Activated naive CD4-positive, alpha-beta T cell treated with anti-CD3 and anti-CD28 coated beads, Interleukin-2, amount 10 ng/mL, durations not matched to agents 7 days and 5 days (primary cell): ENCODE measurements at regions of chr15 and their contacts with region 1.

Region 1: DNA sequence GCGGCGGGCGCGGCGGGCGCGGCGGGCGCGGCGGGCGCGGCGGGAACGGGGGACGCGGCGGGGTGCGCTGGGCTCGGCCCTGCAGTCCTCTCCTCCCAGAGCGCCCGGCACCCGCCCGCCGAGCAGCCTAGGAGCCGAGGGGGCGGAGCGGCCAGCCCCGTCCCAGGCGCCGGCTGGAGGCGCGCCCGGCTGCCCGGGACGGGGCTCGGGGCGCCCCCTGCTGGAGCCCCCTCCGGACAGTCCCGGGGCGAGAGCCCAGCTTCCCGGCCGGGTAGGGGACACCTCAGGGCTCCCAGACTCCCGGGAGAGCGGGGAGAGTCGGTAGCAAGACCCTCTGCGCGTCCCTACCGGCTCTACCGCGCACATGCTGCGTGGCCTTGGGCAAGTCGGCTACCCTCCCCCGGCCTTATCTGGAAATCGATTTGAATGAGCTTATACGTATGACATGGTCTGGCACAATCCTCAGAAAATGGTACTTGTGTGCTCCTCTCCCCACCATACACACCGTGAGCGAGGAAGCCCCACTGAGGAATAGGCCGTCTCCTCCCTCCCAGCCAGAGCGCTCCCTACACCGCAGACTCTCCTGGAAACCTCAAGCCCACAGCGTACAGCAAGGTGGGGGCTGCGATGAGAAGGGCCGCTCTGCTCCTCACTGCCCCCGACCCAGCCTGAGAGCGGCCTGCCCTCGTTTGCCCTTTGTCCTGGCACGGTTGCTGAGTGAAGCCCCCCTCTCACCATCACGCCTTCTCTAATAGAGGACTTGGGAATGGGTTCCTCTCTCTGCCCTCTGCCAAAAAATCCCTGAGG is at the start of gene DAPK2:
- DNase-seq: peak; percentile 73
- H3K4me3 Mint-ChIP-seq: peak within 1 kb of the TSS; percentile 64
- H3K27ac Mint-ChIP-seq: peak within 1 kb of the TSS; percentile 19
- H3K4me1 Mint-ChIP-seq: peaks cover 4% of the 10 kb centered on the region
- H3K27me3 Mint-ChIP-seq: peaks cover 70% of the 10 kb centered on the region

Region 2: DNA sequence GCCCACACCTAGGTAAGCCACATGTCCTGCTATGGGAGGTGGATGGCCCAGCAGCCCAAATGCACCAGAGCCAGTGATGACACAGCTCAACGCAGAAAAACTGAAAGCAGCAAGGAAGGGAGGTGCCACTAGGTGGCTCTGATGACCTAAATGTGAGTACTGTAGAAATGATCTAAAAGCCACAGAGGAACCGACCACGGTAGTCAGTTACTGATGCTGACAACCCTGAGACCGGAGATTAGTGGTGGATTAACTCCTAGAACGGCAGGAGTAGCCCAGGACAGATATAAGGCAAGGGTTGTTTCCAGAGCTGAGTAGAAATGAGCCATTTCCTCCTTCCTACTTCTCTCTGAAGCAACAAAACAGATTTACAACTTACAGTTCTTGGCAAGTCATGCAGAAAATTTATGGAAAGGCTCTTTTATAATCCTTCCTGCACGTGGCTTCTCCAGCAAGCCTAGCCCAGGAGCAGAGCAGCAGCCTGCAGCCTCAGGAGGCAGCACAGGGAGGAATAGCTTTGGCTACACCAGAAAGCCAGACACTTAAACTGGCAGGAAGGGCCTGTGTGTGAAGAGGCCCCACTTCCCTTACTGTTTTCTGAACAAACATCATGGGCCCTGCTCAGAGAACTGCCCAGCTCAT is 436.2 kb before region 1 on chr15:
- CTCF ChIA-PET with region 1: interaction called, 32 read pairs
- DNase-seq: peak; percentile 88
- H3K4me3 Mint-ChIP-seq: no peak overlapping the region
- H3K27ac Mint-ChIP-seq: peak overlapping the region; percentile 90
- H3K4me1 Mint-ChIP-seq: peaks cover 42% of the 10 kb centered on the region
- H3K27me3 Mint-ChIP-seq: no peaks in the 10 kb centered on the region